ENCODE measurements at regions of chr5 and their contacts with region 1.

Region 1: GRCh38 chr5:285639-286557 is 14.5 kb downstream of the PDCD6 start:
- DNase-seq: no peak

Region 2: DNA sequence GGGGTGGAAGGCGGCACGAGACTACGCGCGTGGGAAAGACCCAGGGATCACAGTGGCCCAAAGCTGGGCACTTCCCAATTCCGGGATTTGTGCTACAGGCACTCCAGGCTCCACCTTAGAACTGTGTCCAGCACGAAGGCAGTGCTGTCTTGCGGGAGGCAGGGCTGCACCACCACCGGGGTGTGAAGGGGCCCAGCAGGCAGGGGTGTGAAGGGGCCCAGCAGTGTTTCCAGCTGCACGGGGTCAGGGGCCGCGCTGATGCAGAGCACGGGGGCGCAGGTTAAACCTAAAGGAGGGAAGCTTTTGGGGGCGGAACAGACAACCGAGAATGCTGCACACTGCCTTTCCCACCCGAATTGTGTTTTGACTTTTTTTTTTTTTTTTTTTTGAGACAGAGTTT is 15.6 kb before region 1 on chr5:
- CTCF ChIA-PET with region 1: no interaction called
- POLR2A ChIA-PET with region 1: interaction called, 10 read pairs
- DNase-seq: no peak

Region 3: DNA sequence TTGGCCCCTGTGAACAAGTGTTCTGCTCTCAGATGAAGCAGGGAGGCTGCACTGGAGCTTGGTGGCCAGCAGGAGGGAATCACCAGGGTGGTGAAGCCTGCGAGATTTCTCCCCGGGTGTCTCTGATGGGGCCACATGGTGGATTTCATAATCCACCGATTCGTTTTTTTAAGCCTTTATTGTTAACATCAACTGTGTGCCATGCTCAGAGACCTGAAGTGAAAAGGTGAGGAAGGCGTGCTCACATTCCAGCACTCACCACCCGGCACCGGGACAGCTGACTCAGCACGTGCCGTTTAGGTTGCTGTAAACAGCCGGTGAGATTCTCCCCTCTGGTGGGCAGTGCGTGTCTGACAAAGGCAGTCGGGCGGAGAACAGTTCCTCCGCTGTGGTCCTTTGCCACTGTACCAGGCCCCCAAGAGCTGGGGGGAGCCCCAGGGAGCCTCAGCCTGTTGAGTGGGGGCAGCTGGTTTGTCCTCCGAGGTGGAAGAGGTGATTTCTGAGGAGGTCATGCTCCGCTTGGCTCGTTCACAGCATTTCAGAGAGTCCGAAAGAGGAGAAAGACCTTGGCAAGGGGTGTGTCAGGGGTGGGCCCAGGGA is 22.9 kb after region 1 on chr5:
- CTCF ChIA-PET with region 1: no interaction called
- POLR2A ChIA-PET with region 1: no interaction called
- DNase-seq: no peak